ENCODE measurements at regions of chr2 and their contacts with region 1.

Region 1: DNA sequence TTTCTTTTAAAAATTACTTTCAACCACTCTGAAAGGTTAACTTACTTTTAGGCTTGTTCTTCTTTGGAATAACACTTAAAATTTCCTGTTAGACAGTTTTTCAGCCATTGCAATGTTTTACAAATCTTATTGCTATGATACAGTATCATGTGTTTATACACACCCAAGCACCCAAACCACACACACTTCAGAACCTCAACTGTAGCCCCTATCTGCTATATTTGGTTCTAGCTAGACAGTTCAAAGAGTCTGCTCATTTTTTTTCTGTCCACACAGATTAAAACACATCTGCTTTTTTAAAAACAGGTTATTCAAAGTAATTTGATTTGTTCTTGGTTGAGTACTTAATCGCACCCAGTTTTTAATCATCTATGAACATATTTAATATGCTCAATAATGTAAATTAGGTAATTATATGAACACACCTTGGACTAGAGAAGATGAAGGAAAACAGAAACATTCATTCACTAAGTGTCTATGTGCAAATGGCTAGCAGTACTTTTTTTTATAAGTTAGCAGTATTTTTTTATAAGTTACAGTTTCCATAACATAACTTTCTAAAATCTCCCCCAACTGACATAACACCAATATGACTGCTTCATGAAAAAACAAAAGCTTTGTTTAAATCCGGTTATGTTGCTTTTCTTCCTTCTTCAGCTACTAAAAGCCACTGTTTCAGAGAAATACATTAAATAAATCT is 17.6 kb downstream of the FBXO11 start:
- DNase-seq: no peak
- H3K4me3 ChIP-seq: no peak overlapping the region
- H3K27ac ChIP-seq: no peak overlapping the region
- H3K4me1 ChIP-seq: peaks cover 32% of the 10 kb centered on the region
- CTCF ChIP-seq: no peak

Region 2: DNA sequence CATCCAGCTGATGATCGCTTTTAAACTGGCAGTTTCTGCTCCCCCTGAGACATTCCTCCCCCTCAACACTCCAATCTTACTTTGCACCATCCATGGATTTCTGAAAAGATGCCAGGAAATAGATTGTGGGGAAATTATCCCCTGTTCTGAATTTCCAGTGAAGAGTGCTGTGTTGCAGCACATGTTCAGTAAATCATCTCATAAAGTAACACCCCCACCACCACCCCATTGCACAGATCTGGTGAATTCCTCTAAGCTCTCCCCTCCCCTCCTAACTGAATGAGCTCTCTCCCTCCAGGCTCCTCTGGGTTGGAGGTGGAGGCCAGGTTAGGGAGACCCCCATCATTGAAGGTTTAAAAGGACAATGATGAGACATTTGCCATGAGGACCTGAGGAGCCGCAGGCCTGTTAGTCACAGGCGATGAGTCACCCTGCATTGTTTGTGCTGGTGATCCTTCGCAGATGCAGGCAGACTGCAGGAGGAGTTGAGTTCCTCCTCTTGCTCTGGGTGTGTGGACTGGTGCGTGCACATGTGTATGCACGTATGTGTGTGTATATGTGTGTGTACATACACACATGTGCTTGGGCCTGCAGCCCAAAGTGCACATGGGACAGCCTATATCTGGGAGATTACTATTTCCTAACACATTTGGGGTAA is 1015.2 kb before region 1 on chr2:
- CTCF ChIA-PET with region 1: no interaction called
- POLR2A ChIA-PET with region 1: no interaction called
- intact Hi-C with region 1: no loop called
- DNase-seq: no peak
- H3K4me3 ChIP-seq: no peak overlapping the region
- H3K27ac ChIP-seq: no peak overlapping the region
- H3K4me1 ChIP-seq: no peaks in the 10 kb centered on the region
- CTCF ChIP-seq: no peak

Region 3: GRCh38 chr2:47842846-47843245 is 45.9 kb before region 1 on chr2:
- CTCF ChIA-PET with region 1: no interaction called
- POLR2A ChIA-PET with region 1: no interaction called
- intact Hi-C with region 1: no loop called
- DNase-seq: peak; percentile 16
- H3K4me3 ChIP-seq: no peak overlapping the region
- H3K27ac ChIP-seq: no peak overlapping the region
- H3K4me1 ChIP-seq: peaks cover 9% of the 10 kb centered on the region
- CTCF ChIP-seq: no peak

Region 4: GRCh38 chr2:47876912-47877311 is 11.8 kb before region 1 on chr2:
- CTCF ChIA-PET with region 1: no interaction called
- POLR2A ChIA-PET with region 1: interaction called, 16 read pairs
- intact Hi-C with region 1: no loop called
- DNase-seq: no peak
- H3K4me3 ChIP-seq: no peak overlapping the region
- H3K27ac ChIP-seq: no peak overlapping the region
- H3K4me1 ChIP-seq: no peaks in the 10 kb centered on the region
- CTCF ChIP-seq: no peak

Region 5: GRCh38 chr2:47899915-47900816 is 11.4 kb after region 1 on chr2:
- CTCF ChIA-PET with region 1: no interaction called
- POLR2A ChIA-PET with region 1: interaction called, 10 read pairs
- intact Hi-C with region 1: no loop called
- DNase-seq: no peak
- H3K4me3 ChIP-seq: no peak overlapping the region
- H3K27ac ChIP-seq: peak overlapping the region; percentile 13
- H3K4me1 ChIP-seq: peaks cover 69% of the 10 kb centered on the region
- CTCF ChIP-seq: no peak

Measured in OCI-LY7 (cell line).